Prostate gland (tissue), 2 donors: ENCODE measurements at regions of chr19 and their contacts with region 1.

Region 1: GRCh38 chr19:56105090-56105701 is 15.9 kb downstream of the ZNF787 start:
- DNase-seq: peak; percentile 93
- H3K4me3 ChIP-seq: peak overlapping the region in 1 of 2 donors; percentile 1
- H3K27ac ChIP-seq: peak overlapping the region; percentile 77 to 83
- H3K4me1 ChIP-seq: peaks cover 18% of the 10 kb centered on the region
- H3K27me3 ChIP-seq: no peaks in the 10 kb centered on the region
- CTCF ChIP-seq: peak; percentile 70 to 93 (median 88)
- POLR2A ChIP-seq: no peak

Region 2: DNA sequence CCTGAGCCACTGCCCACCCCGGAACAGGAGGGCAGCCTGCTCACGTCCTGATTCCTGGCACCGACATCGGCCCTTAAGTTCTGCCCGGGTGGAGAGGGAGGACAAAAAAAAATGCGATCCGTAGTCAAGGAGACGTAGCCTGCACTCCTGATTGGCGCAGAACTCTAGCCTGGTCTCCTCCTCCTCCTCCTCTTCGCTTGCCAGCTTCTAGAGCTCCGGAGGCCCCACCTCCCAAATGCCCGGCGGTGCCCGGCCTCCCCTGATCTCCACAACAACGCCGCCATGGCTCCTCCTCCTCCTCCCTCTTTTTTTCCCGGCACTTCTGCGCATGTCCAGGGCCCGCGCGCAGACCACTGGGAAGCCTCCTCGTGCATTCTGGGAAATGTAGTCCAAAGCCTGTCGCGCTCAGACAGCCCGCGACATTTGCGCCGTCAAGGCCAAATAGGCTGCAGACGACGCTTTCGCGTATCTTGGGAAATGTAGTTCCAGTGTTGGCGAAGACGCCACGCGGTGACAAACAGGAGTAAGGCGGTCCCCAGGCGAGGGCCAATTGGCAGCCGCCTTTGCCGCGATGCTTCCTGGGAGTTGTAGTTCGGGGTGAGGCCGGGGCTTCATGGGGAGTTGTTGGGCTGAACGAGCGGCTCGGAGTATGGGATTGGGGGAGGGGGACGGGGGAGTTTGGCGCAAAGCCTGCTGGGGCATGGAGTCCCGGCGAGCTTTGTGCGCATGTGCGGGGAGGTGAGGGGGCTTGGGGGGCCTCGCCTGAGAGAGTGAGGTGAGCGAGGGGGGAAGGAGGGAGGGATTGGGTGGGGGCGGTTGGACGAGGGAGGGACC is 35.6 kb after region 1 on chr19 and contains the start of gene ZNF444:
- intact Hi-C with region 1: loop called (anchors 2 kb)
- DNase-seq: peak; percentile 99
- H3K4me3 ChIP-seq: peak within 1 kb of the TSS; percentile 39 to 57
- H3K27ac ChIP-seq: peak within 1 kb of the TSS; percentile 91 to 96
- H3K4me1 ChIP-seq: peaks cover 22% of the 10 kb centered on the region
- H3K27me3 ChIP-seq: no peaks in the 10 kb centered on the region
- CTCF ChIP-seq: peak in 2 of 4 experiments; percentile 15 to 18
- POLR2A ChIP-seq: peak; percentile 65
- total RNA-seq, gene ZNF444: 62.0 to 105 TPM

Region 3: DNA sequence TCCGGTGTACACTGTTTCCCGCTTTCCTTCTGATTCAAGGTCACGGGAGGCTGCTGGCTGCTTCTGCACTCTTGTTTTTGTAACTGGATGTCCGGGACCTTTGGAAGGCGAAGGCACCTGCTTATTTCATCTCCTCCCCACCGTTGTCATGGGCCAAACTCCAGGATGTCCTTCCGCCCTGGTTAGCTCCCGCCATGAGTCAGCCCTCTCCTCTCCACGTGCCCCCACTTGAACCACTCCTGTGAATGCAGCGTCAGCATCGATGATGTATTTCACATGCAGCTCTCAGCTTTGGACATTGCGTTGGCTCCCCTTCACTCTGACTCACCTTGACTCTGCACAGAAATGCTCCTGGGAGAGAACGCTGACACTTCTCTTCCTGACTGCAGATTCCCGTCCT is 65.1 kb after region 1 on chr19:
- intact Hi-C with region 1: loop called (anchors 2 kb)
- DNase-seq: no peak
- H3K4me3 ChIP-seq: no peak overlapping the region
- H3K27ac ChIP-seq: no peak overlapping the region
- H3K4me1 ChIP-seq: no peaks in the 10 kb centered on the region
- H3K27me3 ChIP-seq: peaks cover 3% of the 10 kb centered on the region
- CTCF ChIP-seq: no peak
- POLR2A ChIP-seq: no peak